GM12878 (cell line): ENCODE measurements at regions of chr22 and their contacts with region 1.

Region 1: DNA sequence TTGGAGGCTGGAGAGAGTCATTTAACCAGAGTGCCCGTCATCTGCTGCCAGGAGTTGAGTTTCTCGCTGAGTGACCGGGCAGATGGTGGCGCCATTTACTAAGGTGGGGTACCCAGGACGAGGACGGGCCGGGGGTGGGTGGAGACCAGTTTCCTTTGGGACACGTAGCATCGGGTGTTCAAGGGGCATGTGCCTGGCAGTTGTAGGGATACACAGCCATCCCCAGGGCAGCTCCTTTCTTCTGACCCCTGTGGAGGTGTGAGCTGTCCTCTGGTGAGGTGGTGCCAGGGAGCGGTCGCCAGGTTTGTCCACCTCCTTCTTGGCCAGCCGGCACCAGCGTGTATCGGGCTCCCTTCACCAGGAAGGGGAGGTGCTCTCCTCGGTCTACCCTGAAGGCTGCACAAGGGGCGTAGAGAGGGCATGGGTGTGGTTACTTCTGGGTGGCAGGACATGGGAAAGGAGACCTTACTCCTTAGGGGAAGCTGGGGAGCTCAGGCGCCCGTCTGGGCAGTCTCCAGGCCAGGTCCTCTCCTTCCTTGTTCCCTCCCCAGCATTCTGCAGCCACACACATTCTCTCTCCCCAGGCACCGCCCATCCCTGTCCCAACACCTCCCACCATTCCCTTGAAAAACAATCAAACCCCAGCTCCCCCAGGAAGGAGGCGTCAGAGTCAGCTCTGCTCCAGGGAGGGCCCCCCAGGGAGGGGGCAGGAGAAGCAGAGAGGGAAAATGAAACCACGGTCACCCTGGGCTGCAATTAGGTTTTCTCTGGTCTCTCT is 10.3 kb upstream of the MB start:
- DNase-seq: no peak
- ATAC-seq: peak; percentile 70
- H3K4me3 ChIP-seq: peak overlapping the region; percentile 76
- H3K27ac ChIP-seq: peak overlapping the region; percentile 52; the same call in 1 of the 2 replicates
- H3K4me1 ChIP-seq: peaks cover 17% of the 10 kb centered on the region
- H3K27me3 ChIP-seq: no peaks in the 10 kb centered on the region
- CTCF ChIP-seq: peak; percentile 48 to 90 (median 54); a peak in 5 of 6 replicates
- EP300 ChIP-seq: no peak
- POLR2A ChIP-seq: no peak
- RAD21 ChIP-seq: peak; percentile 92

Region 2: GRCh38 chr22:35596821-35597220 is 30.6 kb before region 1 on chr22:
- CTCF ChIA-PET with region 1: no interaction called
- POLR2A ChIA-PET with region 1: no interaction called
- RAD21 ChIA-PET with region 1: no interaction called
- SMC1A ChIA-PET with region 1: no interaction called
- in situ Hi-C with region 1: no loop called
- intact Hi-C with region 1: no loop called
- DNase-seq: no peak
- ATAC-seq: no peak
- H3K4me3 ChIP-seq: no peak overlapping the region
- H3K27ac ChIP-seq: no peak overlapping the region
- H3K4me1 ChIP-seq: no peaks in the 10 kb centered on the region
- H3K27me3 ChIP-seq: no peaks in the 10 kb centered on the region
- CTCF ChIP-seq: no peak
- EP300 ChIP-seq: no peak
- POLR2A ChIP-seq: no peak
- RAD21 ChIP-seq: no peak

Region 3: DNA sequence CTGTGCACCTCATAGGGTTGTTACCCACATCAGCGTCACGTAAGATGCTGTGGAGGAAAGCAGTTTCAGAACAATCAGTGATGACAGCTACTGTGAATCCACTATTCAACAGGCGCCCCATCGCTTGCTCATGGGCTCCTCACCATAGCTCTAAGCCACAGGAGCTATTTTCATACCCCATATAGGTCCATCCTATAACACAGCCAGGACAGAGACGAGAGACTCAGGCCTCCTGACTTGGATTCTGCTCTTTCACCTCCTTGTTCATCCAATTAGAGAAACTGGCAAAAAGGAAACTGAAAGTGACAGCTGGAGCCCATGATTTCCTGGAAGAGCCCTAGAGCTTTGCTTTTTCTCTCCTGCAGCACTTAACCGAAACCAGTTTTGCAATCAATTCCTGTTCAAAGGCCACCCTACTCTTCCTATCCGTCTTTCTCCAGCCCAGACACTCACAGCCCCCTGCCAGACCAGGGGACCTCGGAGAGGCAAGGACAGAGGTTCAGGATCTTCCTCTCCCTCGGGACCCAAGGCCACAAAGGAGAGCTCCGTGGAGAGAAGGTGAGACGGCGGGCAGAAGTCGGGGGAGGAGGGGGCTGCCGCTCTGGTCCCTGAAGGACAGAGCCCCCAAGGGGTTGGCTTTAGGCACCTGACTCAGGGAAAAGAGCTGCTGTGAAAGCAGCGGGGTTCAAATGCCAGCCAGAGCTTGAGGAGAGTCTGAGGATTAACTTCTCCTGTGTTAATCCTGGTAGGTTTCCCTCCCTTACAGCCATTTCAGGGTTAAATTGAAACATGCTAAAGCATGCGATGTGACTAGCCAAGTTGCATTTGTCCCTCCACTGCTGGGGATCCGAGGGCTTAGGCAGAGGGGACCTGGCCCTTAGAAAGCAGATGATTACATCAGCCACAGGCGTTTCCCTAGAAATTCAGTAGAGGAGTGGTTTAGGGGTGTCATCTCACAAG is 20.9 kb after region 1 on chr22 and contains the start of gene APOL6:
- CTCF ChIA-PET with region 1: interaction called, 26 read pairs
- POLR2A ChIA-PET with region 1: interaction called, 3 read pairs
- RAD21 ChIA-PET with region 1: interaction called, 30 read pairs
- SMC1A ChIA-PET with region 1: interaction called, 4 read pairs
- in situ Hi-C with region 1: no loop called
- intact Hi-C with region 1: no loop called
- DNase-seq: peak; percentile 65
- ATAC-seq: peak; percentile 79
- H3K4me3 ChIP-seq: peak within 1 kb of the TSS; percentile 91
- H3K27ac ChIP-seq: peak within 1 kb of the TSS; percentile 93
- H3K4me1 ChIP-seq: peaks cover 19% of the 10 kb centered on the region
- H3K27me3 ChIP-seq: no peaks in the 10 kb centered on the region
- CTCF ChIP-seq: no peak
- EP300 ChIP-seq: no peak
- POLR2A ChIP-seq: peak; percentile 65
- RAD21 ChIP-seq: no peak
- polyA plus RNA-seq, gene APOL6: 4.3 to 6.7 TPM

Region 4: DNA sequence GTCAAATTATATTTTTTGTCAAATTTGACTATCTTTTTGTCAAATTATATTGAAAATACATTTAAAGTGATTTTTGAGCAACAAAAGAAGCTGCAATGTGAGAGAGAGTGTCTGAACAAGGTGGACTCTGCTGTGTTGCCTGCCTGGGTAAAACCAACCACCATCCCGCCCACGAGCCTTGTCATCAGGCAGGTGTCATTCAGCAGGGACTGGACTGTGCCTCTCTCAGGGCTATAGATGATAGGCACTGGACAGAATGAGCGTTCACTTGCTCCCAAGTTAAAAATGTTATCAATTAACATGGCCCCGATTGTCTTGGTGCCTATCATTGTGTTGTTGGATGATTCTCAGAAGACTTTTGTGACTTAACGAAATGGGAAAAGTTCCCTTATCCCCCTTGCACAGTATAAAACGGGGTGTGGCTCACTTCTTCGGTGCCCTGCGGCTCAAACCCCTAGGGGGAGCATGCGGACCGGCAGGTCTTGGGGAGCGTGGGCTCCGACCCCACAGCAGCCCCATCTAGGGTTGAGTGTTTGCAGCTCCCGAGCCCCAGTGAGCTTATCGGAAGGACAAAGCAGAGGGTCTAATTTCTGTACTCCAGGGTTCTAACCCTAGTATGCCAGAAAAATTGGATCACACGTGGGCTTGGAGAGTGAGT is 91.9 kb after region 1 on chr22:
- CTCF ChIA-PET with region 1: no interaction called
- POLR2A ChIA-PET with region 1: no interaction called
- RAD21 ChIA-PET with region 1: no interaction called
- SMC1A ChIA-PET with region 1: no interaction called
- in situ Hi-C with region 1: no loop called
- intact Hi-C with region 1: no loop called
- DNase-seq: no peak
- ATAC-seq: no peak
- H3K4me3 ChIP-seq: no peak overlapping the region
- H3K27ac ChIP-seq: no peak overlapping the region
- H3K4me1 ChIP-seq: no peaks in the 10 kb centered on the region
- H3K27me3 ChIP-seq: 0 out of 4 replicates have a peak, but pooled peaks cover 0 to 2% of the 10 kb centered on the region in 2 experiments
- CTCF ChIP-seq: peak in 2 of 3 experiments; percentile 15 to 36; a peak in 2 of 6 replicates
- EP300 ChIP-seq: no peak
- POLR2A ChIP-seq: no peak
- RAD21 ChIP-seq: peak; percentile 24; the same call in 1 of the 2 replicates

Region 5: DNA sequence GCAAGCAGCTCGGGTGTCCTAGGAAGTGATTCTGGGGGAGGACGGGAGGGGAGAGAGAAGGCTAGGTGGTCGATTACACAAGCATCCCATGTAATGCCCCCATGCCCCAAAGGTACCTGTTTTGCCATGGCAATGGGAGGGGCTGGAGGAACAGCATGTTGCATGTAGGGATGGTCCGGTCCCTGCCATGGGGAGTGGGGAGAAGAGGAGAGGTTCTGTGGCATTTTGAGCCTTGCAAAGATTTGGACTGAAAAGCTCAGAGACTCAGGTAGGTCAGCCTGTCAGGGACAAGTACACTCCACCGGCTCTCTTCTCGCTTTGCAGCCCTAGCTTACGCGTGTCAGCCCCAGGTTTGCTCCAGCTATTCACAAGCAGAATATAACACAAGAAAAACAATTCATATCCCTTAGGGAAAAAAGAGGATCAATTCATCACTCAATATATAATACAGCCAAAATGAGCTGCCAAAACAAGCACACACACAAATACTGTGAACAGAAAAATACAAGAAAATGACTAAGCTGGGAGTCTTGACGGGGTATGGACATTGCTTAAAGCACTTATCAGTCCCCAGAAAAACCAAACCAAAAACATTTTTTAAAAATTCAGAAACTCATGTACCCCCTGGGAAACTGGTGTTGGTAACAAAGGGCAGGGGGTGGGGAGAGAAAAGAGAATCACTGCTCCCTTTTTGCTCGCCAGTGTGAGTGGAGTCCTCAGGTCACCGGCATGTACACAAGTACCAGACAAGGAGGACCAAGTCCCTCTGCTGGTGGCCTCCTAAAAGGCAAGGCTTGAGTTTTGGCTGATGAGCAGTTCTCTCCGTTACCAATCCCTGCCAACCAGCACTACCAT is 111.8 kb after region 1 on chr22:
- CTCF ChIA-PET with region 1: interaction called, 5 read pairs
- POLR2A ChIA-PET with region 1: no interaction called
- RAD21 ChIA-PET with region 1: no interaction called
- SMC1A ChIA-PET with region 1: interaction called, 3 read pairs
- in situ Hi-C with region 1: no loop called
- intact Hi-C with region 1: loop called (anchors 5 kb)
- DNase-seq: no peak
- ATAC-seq: peak; percentile 55
- H3K4me3 ChIP-seq: no peak overlapping the region
- H3K27ac ChIP-seq: no peak overlapping the region
- H3K4me1 ChIP-seq: no peaks in the 10 kb centered on the region
- H3K27me3 ChIP-seq: peaks cover 0 to 6% of the 10 kb centered on the region in 2 experiments
- CTCF ChIP-seq: no peak; a peak in 1 of 6 replicates
- EP300 ChIP-seq: no peak
- POLR2A ChIP-seq: no peak
- RAD21 ChIP-seq: no peak

Region 6: GRCh38 chr22:35838855-35839576 is 211.6 kb after region 1 on chr22:
- CTCF ChIA-PET with region 1: interaction called, 9 read pairs
- POLR2A ChIA-PET with region 1: no interaction called
- RAD21 ChIA-PET with region 1: interaction called, 12 read pairs
- SMC1A ChIA-PET with region 1: interaction called, 7 read pairs
- in situ Hi-C with region 1: no loop called
- intact Hi-C with region 1: loop called (anchors 5 kb)
- DNase-seq: no peak
- ATAC-seq: no peak
- H3K4me3 ChIP-seq: no peak overlapping the region
- H3K27ac ChIP-seq: no peak overlapping the region
- H3K4me1 ChIP-seq: no peaks in the 10 kb centered on the region
- H3K27me3 ChIP-seq: peaks cover 0 to 3% of the 10 kb centered on the region in 2 experiments; a peak in 1 of 4 replicates
- CTCF ChIP-seq: peak; percentile 24 to 50 (median 31); a peak in 4 of 6 replicates
- EP300 ChIP-seq: no peak
- POLR2A ChIP-seq: no peak
- RAD21 ChIP-seq: peak; percentile 45

Region 7: GRCh38 chr22:35914665-35915476 is 287.4 kb after region 1 on chr22:
- CTCF ChIA-PET with region 1: interaction called, 5 read pairs
- POLR2A ChIA-PET with region 1: no interaction called
- RAD21 ChIA-PET with region 1: interaction called, 4 read pairs
- SMC1A ChIA-PET with region 1: interaction called, 12 read pairs
- in situ Hi-C with region 1: loop called (anchors 5 kb)
- intact Hi-C with region 1: no loop called
- DNase-seq: no peak
- ATAC-seq: no peak
- H3K4me3 ChIP-seq: no peak overlapping the region
- H3K27ac ChIP-seq: no peak overlapping the region
- H3K4me1 ChIP-seq: no peaks in the 10 kb centered on the region
- H3K27me3 ChIP-seq: peaks cover 0 to 2% of the 10 kb centered on the region in 2 experiments; a peak in 2 of 4 replicates
- CTCF ChIP-seq: no peak
- EP300 ChIP-seq: no peak
- POLR2A ChIP-seq: no peak
- RAD21 ChIP-seq: no peak

Region 8: GRCh38 chr22:35921777-35922176 is 294.3 kb after region 1 on chr22:
- CTCF ChIA-PET with region 1: interaction called, 20 read pairs
- POLR2A ChIA-PET with region 1: no interaction called
- RAD21 ChIA-PET with region 1: interaction called, 4 read pairs
- SMC1A ChIA-PET with region 1: interaction called, 12 read pairs
- in situ Hi-C with region 1: loop called (anchors 5 kb)
- intact Hi-C with region 1: loop called (anchors 1 kb)
- DNase-seq: peak; percentile 13
- ATAC-seq: peak; percentile 87
- H3K4me3 ChIP-seq: no peak overlapping the region
- H3K27ac ChIP-seq: no peak overlapping the region
- H3K4me1 ChIP-seq: no peaks in the 10 kb centered on the region
- H3K27me3 ChIP-seq: no peaks in the 10 kb centered on the region
- CTCF ChIP-seq: peak; percentile 46 to 75 (median 60); a peak in 5 of 6 replicates
- EP300 ChIP-seq: no peak
- POLR2A ChIP-seq: no peak
- RAD21 ChIP-seq: peak; percentile 77

Region 9: DNA sequence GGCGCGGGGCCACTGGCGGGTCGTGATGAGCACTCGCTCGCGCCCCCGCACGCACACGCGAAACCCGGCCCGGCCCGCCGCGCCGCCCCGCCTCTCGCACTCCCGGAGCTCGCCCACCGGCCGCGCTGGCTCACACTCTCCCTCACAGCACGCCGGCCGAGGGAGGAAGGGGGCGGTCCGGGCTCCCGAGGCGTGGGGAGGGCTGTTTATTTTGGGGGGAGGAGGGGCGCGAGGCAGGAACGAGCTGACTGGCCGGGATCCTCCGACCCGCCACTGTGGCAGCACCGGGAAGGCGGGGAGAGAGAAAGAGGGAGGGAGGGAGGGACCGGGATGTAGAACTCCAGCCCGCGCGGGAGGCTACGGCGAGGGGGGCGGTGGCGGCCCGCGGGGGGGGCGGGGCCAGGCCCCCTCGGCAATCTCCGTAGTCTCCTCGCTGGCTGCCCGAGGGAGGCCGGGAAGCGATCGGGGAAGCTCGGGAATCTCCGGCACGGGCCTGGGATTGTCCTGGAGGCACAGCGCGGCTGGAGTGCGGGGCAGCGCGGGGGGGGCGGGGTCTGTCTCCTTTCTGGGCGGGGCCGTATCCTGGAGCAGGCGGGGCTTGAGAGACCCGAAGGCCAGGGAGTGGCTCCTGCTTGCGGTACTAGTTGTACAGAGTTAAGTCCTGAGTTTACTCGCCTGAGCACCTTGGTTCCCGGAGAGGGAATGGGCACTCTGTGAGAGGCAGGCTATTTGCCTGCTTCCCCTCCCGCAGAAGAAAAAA is 401.4 kb after region 1 on chr22 and contains the start of gene RBFOX2:
- CTCF ChIA-PET with region 1: no interaction called
- POLR2A ChIA-PET with region 1: no interaction called
- RAD21 ChIA-PET with region 1: no interaction called
- SMC1A ChIA-PET with region 1: no interaction called
- in situ Hi-C with region 1: no loop called
- intact Hi-C with region 1: no loop called
- DNase-seq: no peak
- ATAC-seq: peak; percentile 86
- H3K4me3 ChIP-seq: peak within 1 kb of the TSS; percentile 2
- H3K27ac ChIP-seq: no peak within 1 kb of the TSS
- H3K4me1 ChIP-seq: no peaks in the 10 kb centered on the region
- H3K27me3 ChIP-seq: peaks cover 0 to 5% of the 10 kb centered on the region in 2 experiments; a peak in 1 of 4 replicates
- CTCF ChIP-seq: no peak
- EP300 ChIP-seq: no peak
- POLR2A ChIP-seq: no peak
- RAD21 ChIP-seq: no peak
- polyA plus RNA-seq, gene RBFOX2: not detected

Region 10: DNA sequence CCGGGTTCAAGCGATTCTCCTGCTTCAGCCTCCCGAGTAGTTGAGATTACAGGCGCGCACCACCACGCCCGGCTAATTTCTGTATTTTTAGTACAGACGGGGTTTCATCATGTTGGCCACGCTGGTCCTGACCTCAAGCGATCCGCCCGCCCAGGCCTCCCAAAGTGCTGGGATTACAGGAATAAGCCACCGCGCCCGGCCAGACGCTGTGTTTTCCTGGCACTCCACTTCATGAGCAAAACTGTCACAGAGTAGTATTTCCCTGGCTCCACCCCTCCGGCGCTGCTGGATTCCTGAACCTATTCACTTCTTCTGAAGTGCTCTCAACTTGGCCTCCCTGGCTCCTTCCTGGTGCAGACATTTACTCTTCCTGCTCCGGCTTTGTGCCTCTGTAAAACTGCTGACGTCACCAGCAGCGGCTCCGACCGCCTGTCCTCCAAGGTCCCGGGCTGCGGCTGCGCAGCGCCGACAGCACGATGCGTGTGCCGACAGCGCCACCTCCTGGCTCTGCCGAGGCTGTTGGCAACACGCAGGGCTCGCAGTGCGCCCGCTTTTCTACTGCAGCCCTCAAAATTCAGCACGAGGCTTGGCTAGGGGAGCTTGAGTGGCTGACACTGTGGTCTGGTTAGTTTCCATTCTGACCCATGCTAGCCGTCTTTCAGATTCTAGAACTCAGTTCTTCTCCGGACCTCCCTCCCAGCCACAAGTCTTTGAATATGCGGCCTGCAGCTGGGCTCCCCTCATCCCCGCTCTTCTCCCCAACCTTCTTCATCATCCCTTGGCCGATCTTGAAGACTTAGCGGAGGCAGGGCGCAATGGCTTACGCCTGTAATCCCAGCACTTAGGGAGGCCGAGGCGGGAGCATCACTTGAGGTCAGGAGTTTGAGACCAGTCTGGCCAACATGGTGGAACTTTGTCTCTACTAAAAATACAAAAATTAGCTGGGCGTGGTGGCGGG is 496.5 kb after region 1 on chr22:
- CTCF ChIA-PET with region 1: interaction called, 17 read pairs
- POLR2A ChIA-PET with region 1: no interaction called
- RAD21 ChIA-PET with region 1: interaction called, 3 read pairs
- SMC1A ChIA-PET with region 1: interaction called, 12 read pairs
- in situ Hi-C with region 1: loop called (anchors 5 kb)
- intact Hi-C with region 1: loop called (anchors 1 kb)
- DNase-seq: peak; percentile 52
- ATAC-seq: peak; percentile 100
- H3K4me3 ChIP-seq: peak overlapping the region; percentile 26; the same call in 1 of the 2 replicates
- H3K27ac ChIP-seq: no peak overlapping the region
- H3K4me1 ChIP-seq: no peaks in the 10 kb centered on the region
- H3K27me3 ChIP-seq: no peaks in the 10 kb centered on the region
- CTCF ChIP-seq: peak; percentile 98 to 99 (median 99); a peak in 5 of 6 replicates
- EP300 ChIP-seq: no peak
- POLR2A ChIP-seq: 0 out of 2 replicates have a peak, but pooled peaks have one; percentile 30
- RAD21 ChIP-seq: peak; percentile 96